ENCODE measurements at regions of chr5 and their contacts with region 1.

Region 1: DNA sequence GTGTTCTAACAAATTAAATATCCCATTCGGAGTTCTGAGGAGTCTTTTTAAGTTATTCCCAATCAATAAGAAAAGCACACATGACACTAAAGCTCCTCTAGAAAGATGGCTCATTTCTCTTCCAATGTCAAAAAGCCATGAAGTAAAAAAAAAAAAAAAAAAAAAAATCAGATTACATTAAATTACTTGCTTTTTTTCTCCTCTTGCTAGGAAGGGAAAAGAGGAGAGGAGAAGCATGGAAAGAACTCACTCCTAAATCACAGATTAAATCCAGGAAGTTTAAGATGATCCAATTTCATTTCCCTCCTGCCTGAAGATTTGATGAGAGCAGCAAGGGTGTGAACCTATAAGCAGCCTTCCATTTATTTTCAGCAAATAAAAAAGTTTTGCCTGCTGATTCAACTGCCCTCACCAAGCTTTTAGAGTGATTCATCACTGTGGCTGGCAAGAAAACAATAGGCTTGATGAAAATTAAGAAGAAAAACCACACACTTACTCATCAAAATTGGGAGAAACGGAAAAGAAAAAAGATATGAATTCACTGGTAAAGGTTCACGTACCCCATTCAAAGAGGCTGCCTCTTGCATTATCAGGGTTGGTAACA is 19.7 kb downstream of the MYO10 start:
- DNase-seq: no peak

Region 2: GRCh38 chr5:16936932-16937331 is 20.6 kb after region 1 on chr5:
- intact Hi-C with region 1: loop called in 1 of 2 experiments (anchors 1 kb)
- DNase-seq: no peak

Region 3: DNA sequence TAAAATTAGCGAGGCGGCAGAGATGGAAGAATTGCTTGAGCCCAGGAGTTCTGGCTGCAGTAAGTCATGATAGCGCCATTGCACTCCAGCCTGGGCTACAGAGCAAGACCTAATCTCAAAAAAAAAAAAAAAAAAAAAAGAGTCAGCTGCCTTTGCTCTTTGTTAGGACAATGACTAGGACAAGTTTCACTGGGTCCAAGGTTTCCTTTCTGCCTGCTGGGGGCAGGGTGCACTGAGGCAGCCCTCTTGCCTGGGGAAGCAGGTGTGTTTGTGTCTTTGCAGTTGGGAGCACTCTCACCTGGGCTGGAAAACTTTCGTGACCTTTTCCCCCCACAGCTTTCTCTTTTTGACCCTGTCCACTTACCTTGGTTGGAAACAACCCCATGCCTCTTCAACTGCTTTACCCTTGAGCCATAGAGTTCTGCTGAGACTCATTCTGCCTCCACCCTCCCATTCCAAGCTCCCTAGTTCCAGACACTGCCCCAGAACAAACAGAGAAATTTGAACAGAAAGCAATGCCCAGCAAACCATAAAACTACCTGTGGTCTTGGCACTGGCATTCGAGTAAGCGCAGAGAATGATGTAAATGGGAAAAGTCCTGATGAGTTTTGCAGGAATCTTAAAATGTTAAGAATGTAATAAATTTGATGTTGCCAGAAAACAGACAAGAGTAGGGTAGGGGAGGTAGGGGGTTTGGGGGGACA is 36.8 kb after region 1 on chr5:
- intact Hi-C with region 1: no loop called
- DNase-seq: no peak

Region 4: GRCh38 chr5:18772207-18772874 is 1856.0 kb after region 1 on chr5:
- intact Hi-C with region 1: no loop called
- DNase-seq: no peak

Measured in posterior vena cava (tissue), 2 donors.